Activated T-helper 2 cell treated with anti-CD3 and anti-CD28 coated beads, Interferon-gamma antibody, Interleukin-2, Interleukin-4, amounts not matched to agents 10 μg/mL and 5 μg/mL and 100 μg/mL, durations not matched to agents 14 hours and 24 hours and 36 hours (primary cell): ENCODE measurements at regions of chr5 and their contacts with region 1.

Region 1: DNA sequence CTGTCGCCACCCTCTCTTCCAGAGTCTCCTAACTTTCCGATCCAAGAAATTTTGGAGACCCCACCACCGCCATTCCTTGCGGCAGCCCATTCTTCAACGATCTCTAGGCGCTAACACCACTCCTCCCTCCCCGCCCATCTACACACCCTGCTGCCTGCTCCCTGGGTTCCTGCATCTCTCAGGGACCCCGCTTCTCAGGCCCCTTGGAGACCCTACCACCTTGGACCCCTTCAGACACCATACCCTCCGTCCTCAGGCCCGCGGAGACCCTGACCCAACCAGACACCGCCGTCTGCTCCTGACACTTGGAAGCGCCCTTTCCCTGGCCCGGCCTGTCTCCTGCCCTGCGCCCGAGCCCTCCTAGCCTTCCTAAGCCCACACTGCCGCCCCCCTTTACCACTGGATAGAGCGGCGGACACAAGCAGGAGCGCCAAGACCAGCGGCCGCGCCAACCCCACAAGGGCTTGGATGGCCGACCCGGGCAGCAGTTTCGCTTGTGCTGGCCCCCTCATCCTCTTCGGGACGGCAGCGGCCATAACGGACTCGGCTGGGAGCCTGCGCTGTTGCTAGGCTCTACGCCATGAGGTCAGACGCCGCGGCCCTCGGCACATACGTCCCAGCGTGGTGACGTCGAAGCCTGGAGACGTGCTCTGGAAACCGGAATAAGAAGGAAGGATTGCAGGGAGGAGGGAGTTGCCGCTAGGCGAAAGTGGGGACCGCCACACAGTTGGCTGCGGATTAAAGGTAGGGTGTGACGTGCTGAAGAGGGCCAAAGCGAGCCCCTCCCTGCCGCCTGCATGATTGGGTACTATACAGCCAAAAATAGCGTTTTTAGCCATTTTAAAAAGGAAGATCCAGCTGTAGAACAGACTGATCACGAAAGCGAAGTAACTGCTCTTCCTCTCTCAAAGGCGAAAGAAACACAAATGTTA is at the start of gene C5orf15:
- DNase-seq: peak; percentile 91
- H3K4me3 Mint-ChIP-seq: peak within 1 kb of the TSS; percentile 96
- H3K27ac Mint-ChIP-seq: peak within 1 kb of the TSS; percentile 93
- H3K4me1 Mint-ChIP-seq: peaks cover 40% of the 10 kb centered on the region
- H3K27me3 Mint-ChIP-seq: no peaks in the 10 kb centered on the region
- total RNA-seq, gene C5orf15: 63.7 and 66.7 TPM in 2 replicates

Region 2: DNA sequence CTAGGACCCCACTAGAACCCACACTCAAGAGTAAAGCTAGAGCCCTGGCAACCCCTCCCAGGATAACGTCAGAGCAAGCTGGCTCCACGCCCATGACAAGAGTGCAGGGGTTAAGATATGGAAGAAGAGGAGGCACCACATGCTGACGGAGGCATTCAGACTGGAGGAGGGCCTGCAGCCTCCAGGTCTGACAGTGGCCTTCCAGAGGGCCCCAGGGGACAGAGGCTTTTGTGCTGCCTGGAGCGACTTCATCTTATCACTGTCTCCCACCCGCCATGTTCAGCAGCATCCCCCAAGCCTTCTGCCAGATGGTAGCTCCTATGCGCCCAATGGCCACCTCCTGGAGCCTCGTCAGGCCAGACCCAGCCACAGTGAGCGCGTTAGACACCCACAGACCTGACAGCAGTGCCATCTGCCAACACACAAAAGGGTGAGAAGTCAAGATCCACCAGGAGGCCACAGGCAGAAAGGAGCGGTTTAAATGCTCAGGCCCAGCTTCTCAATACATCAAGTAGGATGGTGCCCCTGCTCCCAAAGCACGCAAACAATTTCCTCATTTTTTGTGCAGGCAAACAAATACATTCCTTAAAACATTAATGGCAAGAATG is 65.7 kb before region 1 on chr5:
- intact Hi-C with region 1: no loop called
- DNase-seq: no peak
- H3K4me3 Mint-ChIP-seq: no peak overlapping the region
- H3K27ac Mint-ChIP-seq: no peak overlapping the region
- H3K4me1 Mint-ChIP-seq: no peaks in the 10 kb centered on the region
- H3K27me3 Mint-ChIP-seq: no peaks in the 10 kb centered on the region

Region 3: DNA sequence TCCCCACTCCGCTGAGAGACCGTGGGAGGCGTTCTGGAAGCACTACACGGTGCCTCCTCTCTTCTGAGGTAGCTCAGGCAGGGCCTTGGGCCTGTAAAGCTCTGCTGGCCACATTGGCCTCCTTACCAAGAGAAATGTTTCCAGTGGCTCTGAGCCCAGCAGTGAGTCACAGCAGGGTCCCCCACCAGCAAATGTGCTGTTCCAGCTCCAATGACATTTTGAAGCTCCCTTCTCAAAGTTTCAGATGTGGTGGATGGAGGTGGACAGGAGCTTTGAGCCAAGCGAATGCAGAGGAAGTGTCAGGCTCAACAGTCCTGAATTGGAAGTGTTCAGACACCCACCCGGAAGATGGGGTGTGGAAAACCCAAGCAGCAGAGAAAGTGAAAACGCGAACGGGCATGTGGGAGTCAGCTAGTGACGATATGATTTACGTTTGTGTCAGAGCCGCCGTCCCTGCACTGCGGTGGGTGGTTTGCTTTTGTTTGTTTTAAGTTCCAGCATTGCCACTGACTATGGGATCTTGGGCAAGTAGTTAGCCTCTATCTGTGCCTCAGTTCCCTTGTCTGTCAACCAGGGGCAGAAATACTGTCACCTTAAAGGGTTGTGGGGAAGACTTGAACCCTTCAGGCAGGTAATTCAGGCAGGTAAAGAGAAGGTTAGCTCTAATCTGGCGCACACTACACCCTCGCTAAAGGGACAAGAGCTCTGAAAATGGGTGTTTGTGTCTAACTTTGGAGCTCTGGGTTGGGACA is 38.1 kb before region 1 on chr5:
- intact Hi-C with region 1: loop called (anchors 1 kb)
- DNase-seq: peak; percentile 39
- H3K4me3 Mint-ChIP-seq: peak overlapping the region; percentile 54
- H3K27ac Mint-ChIP-seq: peak overlapping the region; percentile 97
- H3K4me1 Mint-ChIP-seq: peaks cover 55% of the 10 kb centered on the region
- H3K27me3 Mint-ChIP-seq: no peaks in the 10 kb centered on the region

Region 4: GRCh38 chr5:134004592-134005375 is 36.5 kb after region 1 on chr5 and contains the start of gene VDAC1:
- intact Hi-C with region 1: loop called (anchors 2 kb)
- DNase-seq: peak; percentile 81
- H3K4me3 Mint-ChIP-seq: peak within 1 kb of the TSS; percentile 92
- H3K27ac Mint-ChIP-seq: peak within 1 kb of the TSS; percentile 97
- H3K4me1 Mint-ChIP-seq: peaks cover 40% of the 10 kb centered on the region
- H3K27me3 Mint-ChIP-seq: no peaks in the 10 kb centered on the region
- total RNA-seq, gene VDAC1: 455 and 459 TPM in 2 replicates